ENCODE measurements at regions of chr15 and their contacts with region 1.

Region 1: DNA sequence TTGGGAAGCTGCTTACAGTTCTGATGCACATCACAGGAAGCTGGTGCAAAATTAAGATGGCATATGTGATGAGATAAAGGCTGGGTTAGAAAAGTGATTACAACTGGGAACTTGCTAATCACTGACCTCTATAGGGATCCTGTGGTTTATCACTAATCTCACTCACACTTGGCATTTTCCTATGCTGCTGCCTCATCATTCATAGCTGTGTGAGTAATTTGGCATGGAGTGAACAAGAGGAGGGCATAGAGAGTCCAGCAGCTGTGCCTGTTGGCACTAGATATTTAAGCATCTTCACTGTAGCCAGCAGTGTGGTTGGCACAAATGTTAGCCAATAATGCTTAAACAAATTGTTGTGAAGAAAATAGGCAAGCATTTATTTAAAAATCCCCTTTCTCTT is 217.7 kb upstream of the CGNL1 start:
- DNase-seq: no peak
- H3K4me3 ChIP-seq: no peak overlapping the region
- H3K27ac ChIP-seq: no peak overlapping the region
- H3K4me1 ChIP-seq: peaks cover 5% of the 10 kb centered on the region
- H3K27me3 ChIP-seq: no peaks in the 10 kb centered on the region
- CTCF ChIP-seq: no peak
- EP300 ChIP-seq: no peak
- POLR2A ChIP-seq: no peak

Region 2: GRCh38 chr15:57213862-57214261 is 55.3 kb after region 1 on chr15:
- intact Hi-C with region 1: loop called in 1 of 4 experiments (anchors 10 kb)
- DNase-seq: no peak
- H3K4me3 ChIP-seq: no peak overlapping the region
- H3K27ac ChIP-seq: no peak overlapping the region
- H3K4me1 ChIP-seq: peaks cover 1% of the 10 kb centered on the region
- H3K27me3 ChIP-seq: no peaks in the 10 kb centered on the region
- CTCF ChIP-seq: peak; percentile 17 to 50 (median 41)
- EP300 ChIP-seq: no peak
- POLR2A ChIP-seq: no peak

Region 3: DNA sequence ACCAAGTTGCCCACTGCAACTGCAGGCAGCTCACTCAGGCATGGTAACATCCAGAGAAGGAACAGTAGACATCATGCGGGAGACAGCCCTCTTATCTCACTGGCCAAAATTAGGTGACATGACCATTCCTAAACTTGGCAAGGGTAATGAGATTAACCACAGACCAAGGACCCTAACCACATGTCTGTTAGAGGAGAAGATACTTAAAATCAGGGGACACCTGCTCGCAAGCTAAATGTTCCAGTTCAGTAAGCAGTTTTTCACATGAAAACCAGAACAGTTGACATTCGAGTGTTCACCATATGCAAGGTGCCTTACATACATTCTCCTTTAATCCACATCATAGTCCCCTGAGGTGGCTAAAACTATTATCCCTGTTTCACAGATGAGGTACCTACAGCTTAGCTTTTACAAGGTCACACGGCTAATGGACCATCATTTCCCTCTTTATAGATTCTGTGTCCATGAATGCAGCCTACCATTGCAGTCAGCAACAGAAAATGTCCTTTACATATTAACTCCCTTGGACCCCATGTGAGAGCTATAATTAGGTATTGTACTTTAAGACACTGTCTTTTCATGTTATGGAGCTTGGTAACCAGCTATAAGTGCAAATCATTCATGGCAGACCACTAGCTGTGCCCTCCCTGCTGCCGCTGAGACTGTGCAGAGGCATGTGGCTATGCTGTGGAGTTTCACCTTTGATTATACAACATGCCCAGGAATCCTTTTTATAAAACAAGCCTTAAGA is 1427.3 kb after region 1 on chr15:
- intact Hi-C with region 1: loop called in 1 of 4 experiments (anchors 5 kb)
- DNase-seq: no peak
- H3K4me3 ChIP-seq: no peak overlapping the region
- H3K27ac ChIP-seq: no peak overlapping the region
- H3K4me1 ChIP-seq: no peaks in the 10 kb centered on the region
- H3K27me3 ChIP-seq: no peaks in the 10 kb centered on the region
- CTCF ChIP-seq: no peak
- EP300 ChIP-seq: no peak
- POLR2A ChIP-seq: no peak